ENCODE measurements at regions of chr2 and their contacts with region 1.

Region 1: GRCh38 chr2:31138037-31138962 is at the start of gene GALNT14:
- DNase-seq: peak; percentile 32 to 76 (median 54)
- H3K4me3 ChIP-seq: peak within 1 kb of the TSS; percentile 33 to 79 (median 66)
- H3K27ac ChIP-seq: peak within 1 kb of the TSS in 38 of 59 donors; percentile 5 to 76 (median 39)
- H3K27me3 ChIP-seq: peaks cover 0 to 19% (median 0%) of the 10 kb centered on the region in 45 donors
- CTCF ChIP-seq: peak in 55 of 56 donors; percentile 11 to 71 (median 53)
- total RNA-seq, gene GALNT14: 4.0 to 20.3 (median 11.8) TPM

Region 2: DNA sequence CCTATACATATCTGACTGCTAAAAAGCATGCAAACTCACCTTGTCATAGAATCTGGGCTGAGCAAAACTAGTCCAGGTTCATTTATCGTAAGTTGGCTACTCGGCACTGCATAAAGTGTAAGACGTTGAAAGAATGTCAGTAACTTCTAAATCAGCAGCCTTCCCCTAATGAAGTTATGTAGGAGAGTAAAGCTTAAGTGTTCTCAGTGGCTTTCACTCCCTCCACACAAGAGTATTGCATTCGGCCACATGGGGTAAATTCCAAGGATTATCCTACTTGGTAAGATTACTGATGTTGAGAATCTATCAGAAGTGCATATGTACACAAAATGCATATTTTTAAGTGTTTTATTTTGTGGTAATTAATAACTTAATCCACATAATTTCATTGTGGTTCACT is 561.1 kb before region 1 on chr2:
- intact Hi-C with region 1: no loop called
- DNase-seq: no peak
- H3K4me3 ChIP-seq: no peak overlapping the region
- H3K27ac ChIP-seq: no peak overlapping the region
- H3K27me3 ChIP-seq: no peaks in the 10 kb centered on the region
- CTCF ChIP-seq: no peak

Region 3: GRCh38 chr2:31067259-31067658 is 71.0 kb before region 1 on chr2:
- intact Hi-C with region 1: loop called in 1 of 2 experiments (anchors 10 kb)
- DNase-seq: no peak
- H3K4me3 ChIP-seq: no peak overlapping the region
- H3K27ac ChIP-seq: peak overlapping the region in 15 of 59 donors; percentile 1 to 77 (median 52)
- H3K27me3 ChIP-seq: no peaks in the 10 kb centered on the region
- CTCF ChIP-seq: peak in 24 of 56 donors; percentile 9 to 65 (median 23)

Region 4: GRCh38 chr2:31219131-31219969 is 81.0 kb after region 1 on chr2:
- intact Hi-C with region 1: no loop called
- DNase-seq: no peak
- H3K4me3 ChIP-seq: no peak overlapping the region
- H3K27ac ChIP-seq: no peak overlapping the region
- H3K27me3 ChIP-seq: no peaks in the 10 kb centered on the region
- CTCF ChIP-seq: no peak

Measured in dorsolateral prefrontal cortex (tissue), 120 donors.